ENCODE measurements at regions of chr14 and their contacts with region 1.

Region 1: GRCh38 chr14:67359775-67360648 is at the starts of genes ATP6V1D and EIF2S1:
- DNase-seq: peak; percentile 99
- H3K4me3 Mint-ChIP-seq: peak within 1 kb of the TSS; percentile 92
- H3K27ac Mint-ChIP-seq: peak within 1 kb of the TSS; percentile 94
- H3K4me1 Mint-ChIP-seq: peaks cover 61% of the 10 kb centered on the region
- H3K27me3 Mint-ChIP-seq: no peaks in the 10 kb centered on the region
- total RNA-seq, gene ATP6V1D: 43.6 to 48.9 TPM
- total RNA-seq, gene EIF2S1: 114 to 115 TPM

Region 2: DNA sequence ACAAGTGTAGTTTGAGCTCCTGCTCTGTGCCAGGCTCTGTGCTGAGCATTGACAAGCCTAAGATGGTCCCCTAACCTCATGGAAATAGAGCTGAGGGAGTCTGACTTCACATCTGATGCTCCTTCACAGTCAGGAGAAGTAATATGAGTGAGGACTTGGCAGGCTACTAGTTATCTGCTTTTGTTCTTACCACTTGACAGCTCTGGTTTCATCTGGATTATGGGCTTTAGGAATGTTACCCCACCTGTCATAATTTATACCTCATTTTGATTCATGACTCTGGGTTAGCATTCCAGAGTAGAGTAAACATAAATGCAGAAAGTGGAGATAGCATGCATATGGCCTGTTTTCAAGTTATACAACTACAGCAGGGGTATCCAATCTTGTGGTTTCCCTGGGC is 40.9 kb before region 1 on chr14:
- CTCF ChIA-PET with region 1: no interaction called
- POLR2A ChIA-PET with region 1: no interaction called
- DNase-seq: no peak
- H3K4me3 Mint-ChIP-seq: no peak overlapping the region
- H3K27ac Mint-ChIP-seq: no peak overlapping the region
- H3K4me1 Mint-ChIP-seq: no peaks in the 10 kb centered on the region
- H3K27me3 Mint-ChIP-seq: no peaks in the 10 kb centered on the region

Region 3: DNA sequence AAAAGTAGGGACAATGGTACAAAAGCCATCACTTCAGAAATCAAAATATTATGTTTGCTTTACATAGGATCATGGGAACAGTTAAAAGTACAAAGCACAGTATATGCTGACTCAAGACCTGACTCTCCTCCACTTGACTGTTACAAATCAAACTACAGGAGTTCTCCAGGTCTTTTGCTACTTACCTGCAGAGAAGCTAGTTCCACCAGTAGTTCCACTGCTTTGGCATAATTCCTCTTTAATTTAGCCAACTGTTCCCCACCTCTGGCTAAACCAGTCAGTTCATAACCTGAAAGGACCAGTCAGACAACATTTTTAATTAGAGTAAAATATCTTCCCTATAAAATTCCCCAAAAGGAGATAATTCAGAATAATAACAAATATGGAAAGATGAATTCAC is 14.4 kb before region 1 on chr14:
- CTCF ChIA-PET with region 1: interaction called, 15 read pairs
- POLR2A ChIA-PET with region 1: no interaction called
- DNase-seq: no peak
- H3K4me3 Mint-ChIP-seq: no peak overlapping the region
- H3K27ac Mint-ChIP-seq: no peak overlapping the region
- H3K4me1 Mint-ChIP-seq: no peaks in the 10 kb centered on the region
- H3K27me3 Mint-ChIP-seq: no peaks in the 10 kb centered on the region

Region 4: GRCh38 chr14:67373347-67373746 is 13.3 kb after region 1 on chr14:
- CTCF ChIA-PET with region 1: interaction called, 17 read pairs
- POLR2A ChIA-PET with region 1: no interaction called
- DNase-seq: no peak
- H3K4me3 Mint-ChIP-seq: no peak overlapping the region
- H3K27ac Mint-ChIP-seq: no peak overlapping the region
- H3K4me1 Mint-ChIP-seq: peaks cover 19% of the 10 kb centered on the region
- H3K27me3 Mint-ChIP-seq: no peaks in the 10 kb centered on the region

Measured in activated CD4-positive, alpha-beta T cell treated with anti-CD3 and anti-CD28 coated beads, Interleukin-2, amount 10 ng/mL, durations not matched to agents 7 days and 5 days (primary cell).